ENCODE measurements at regions of chr7 and their contacts with region 1.

Region 1: DNA sequence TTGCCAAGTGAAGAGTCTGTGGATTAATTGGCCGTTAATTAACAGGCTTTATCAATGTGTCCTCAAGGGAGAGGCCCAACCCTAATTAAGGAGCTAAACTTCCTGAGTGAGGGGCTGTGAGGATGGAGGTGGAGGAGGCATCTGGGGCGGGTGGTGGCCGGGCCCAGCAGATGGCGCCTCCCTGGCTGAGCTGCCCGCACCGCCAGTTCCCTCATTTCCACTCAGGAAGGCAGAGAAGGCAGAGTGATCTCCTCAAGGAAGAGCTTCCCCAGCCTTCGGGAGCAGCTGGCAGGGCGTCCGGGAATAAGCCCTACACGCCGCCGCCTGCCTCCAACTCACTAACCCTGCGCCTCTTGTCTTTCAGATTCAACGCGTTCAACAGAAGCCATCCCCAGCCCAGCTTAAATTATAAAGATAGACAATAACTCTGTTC is 112.2 kb downstream of the CYTH3 start:
- DNase-seq: peak; percentile 16
- H3K4me3 ChIP-seq: no peak overlapping the region
- CTCF ChIP-seq: peak; percentile 93

Region 2: DNA sequence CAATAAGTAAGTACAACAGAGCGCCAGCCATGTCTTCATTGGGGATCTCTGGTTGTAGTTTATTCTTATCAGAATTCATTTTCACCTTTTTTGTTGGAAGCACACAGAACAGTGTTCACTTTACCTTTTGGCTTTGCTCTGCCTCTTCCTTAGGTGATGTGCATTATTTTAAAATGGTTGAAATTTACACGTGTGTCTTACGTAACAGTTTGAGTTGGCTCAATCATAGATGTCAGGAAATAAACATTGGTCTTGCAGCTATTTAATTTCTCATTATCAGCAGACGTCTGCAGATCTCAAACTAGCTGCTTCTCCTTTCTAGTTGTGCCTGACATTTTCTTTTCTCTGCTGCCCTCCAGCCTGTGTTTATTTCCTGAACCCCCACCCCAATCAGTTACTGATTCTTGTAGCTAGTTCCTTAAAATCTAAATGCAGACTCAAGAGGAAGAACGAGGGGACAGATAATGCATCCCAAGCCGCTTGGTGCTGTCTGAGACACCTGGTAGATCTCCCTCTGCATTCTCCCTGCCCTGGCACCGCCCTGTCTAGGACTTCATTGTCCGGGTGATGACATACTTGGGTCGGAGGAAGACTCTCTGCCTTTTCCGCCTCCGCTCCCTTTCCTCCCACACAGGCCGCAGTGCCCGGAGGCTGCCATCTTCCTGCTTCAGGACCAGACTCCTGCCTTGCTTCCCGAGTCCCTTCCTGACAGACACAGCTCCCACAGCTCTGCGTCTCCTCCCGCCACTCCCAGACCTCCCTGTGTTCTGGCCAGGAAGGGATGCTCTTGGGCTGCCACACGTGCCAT is 20.8 kb before region 1 on chr7:
- CTCF ChIA-PET with region 1: interaction called, 23 read pairs
- POLR2A ChIA-PET with region 1: no interaction called
- DNase-seq: no peak
- H3K4me3 ChIP-seq: no peak overlapping the region
- CTCF ChIP-seq: no peak

Region 3: DNA sequence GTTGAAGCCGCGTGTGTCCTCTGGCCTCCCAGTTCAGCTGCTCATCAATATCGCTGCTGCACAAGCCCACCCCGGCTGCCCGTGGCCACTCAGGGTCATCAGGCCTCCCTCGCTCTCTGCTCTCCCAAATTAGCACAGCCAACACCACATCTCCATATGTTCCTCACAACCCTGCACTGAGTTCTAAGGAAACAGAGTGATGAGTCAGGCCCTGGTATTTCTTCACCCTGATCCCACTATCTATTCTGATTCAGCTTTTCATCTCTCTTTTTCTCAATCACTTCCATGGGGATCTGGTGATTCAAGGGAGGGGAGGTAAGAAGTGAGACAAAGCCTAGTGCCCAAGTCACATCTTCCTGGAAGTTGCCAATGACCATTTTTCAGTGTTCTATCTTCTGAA is 88.4 kb after region 1 on chr7:
- CTCF ChIA-PET with region 1: interaction called, 11 read pairs
- POLR2A ChIA-PET with region 1: interaction called, 4 read pairs
- DNase-seq: no peak
- H3K4me3 ChIP-seq: peak overlapping the region; percentile 16
- CTCF ChIP-seq: no peak

Region 4: DNA sequence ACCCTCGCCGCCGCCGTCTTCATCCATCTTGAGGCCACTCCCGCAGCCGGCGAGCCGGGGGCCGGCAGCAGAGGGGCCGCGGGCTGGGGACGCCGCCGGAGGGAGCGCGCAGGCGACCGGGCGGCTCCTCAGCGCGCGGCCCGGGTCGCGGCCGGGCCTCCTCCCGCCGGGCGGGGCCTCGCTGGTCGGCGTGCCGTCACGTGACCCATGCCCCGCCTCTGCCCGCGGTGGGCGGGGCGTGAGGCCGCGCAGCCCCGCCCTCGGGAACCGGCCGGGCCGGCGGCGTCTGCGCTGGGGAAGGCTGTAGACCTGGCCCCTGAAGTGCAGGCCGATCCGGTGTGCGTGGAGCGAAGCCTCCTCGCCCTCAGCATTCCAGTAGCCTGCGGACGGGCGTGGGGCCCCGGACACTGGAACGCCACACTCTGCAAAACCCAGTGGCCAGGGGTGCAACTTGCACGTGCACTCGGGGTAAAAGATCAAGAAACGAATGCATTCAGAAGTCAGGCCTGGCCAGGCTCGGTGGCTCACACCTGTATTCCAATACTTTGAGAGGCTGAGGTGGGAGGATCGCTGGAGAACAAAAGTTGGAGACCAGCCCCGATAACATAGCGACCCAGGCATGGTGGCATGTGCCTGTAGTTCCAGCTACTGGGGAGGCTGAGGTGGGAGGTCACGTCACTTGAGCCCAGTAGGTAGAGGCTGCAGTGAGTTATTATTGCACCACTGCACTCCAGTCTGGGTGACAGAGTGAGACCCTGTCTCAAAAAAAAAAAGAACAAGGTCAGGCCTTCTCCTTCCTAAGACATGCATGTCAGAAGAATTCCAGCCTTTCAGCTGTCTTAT is 112.5 kb after region 1 on chr7 and contains the start of gene CYTH3:
- CTCF ChIA-PET with region 1: interaction called, 16 read pairs
- POLR2A ChIA-PET with region 1: no interaction called
- DNase-seq: no peak
- H3K4me3 ChIP-seq: peak within 1 kb of the TSS; percentile 97
- CTCF ChIP-seq: no peak

Region 5: DNA sequence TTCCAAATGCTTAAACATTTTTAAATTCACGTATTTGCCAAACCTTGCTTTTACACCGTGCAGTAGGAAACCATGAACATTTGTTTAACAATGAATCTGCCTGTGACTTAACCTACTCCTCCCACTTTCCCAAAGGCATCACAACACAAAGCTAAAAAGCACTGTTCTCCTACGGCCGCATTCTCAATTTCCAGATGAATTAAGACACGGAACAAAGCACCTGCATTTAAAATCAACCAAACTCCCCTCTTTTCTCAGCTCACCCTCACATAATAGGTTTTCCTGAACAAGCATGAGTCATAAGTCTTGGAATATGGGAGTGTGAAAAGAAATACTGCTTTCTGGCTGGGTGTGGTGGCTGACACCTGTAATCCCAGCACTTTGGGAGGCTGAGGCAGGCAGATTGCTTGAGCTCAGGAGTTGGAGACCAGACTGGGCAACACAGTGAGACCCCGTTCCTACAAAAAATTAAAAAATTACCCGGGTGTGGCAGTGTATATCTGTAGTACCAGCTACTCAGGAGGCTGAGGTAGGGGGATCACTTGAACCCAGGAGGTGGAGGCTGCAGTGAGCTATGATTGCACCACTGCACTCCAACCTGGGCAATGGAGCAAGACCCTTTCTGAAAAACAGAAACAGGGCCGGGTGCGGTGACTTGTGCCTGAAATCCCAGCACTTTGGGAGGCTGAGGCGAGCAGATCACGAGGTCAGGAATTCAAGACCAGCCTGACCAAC is 163.9 kb after region 1 on chr7:
- CTCF ChIA-PET with region 1: interaction called, 277 read pairs
- POLR2A ChIA-PET with region 1: interaction called, 5 read pairs
- DNase-seq: no peak
- H3K4me3 ChIP-seq: no peak overlapping the region
- CTCF ChIP-seq: no peak

Region 6: GRCh38 chr7:6338551-6339274 is 178.5 kb after region 1 on chr7:
- CTCF ChIA-PET with region 1: interaction called, 10 read pairs
- POLR2A ChIA-PET with region 1: no interaction called
- DNase-seq: no peak
- H3K4me3 ChIP-seq: no peak overlapping the region
- CTCF ChIP-seq: no peak